H1 (cell line): ENCODE measurements at regions of chr1 and their contacts with region 1.

Region 1: GRCh38 chr1:39258146-39258924 is 53.8 kb downstream of the MACF1 start:
- DNase-seq: peak; percentile 47 to 89
- H3K4me3 ChIP-seq: no peak overlapping the region
- H3K27ac ChIP-seq: no peak overlapping the region
- H3K4me1 ChIP-seq: peaks cover 0 to 2% (median 0%) of the 10 kb centered on the region in 4 experiments; a peak in 1 of 7 replicates
- H3K27me3 ChIP-seq: no peaks in the 10 kb centered on the region
- CTCF ChIP-seq: peak; percentile 65 to 95 (median 89)
- EP300 ChIP-seq: no peak
- POLR2A ChIP-seq: no peak
- RAD21 ChIP-seq: peak; percentile 98 to 99

Region 2: DNA sequence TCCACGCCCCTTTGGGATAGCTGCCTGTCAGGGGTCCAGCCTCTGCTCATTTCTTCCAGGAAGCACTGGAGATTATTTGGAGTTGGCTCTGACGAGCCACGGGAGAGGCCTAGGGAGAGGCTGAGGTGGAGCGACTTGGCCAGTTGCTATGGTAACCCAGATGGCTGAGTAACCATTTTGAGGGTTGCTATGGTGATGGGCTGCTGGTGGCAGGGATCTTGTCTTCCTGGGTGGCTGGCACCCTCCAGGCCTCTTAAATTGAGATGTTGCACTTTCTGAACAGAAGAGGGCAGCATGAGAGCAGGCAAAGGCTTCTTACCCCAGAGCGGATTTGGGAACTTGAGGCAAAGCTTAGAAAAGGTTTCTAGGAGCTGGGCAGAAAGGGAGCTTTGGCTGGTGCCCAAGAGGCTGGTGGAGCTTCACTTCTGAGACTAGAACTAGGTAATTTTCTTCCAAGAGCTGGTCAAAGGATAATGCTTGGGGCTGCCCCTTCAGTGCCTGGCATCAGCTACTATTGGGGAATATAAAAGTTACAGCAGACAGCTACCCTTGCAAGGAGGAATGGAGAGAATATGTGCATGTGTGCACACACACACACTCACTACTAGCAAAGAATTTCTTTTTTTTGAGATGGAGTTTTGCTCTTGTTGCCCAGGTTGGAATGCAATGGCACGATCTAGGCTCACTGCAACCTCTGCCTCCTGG is 159.6 kb before region 1 on chr1:
- CTCF ChIA-PET with region 1: interaction called, 139 read pairs
- POLR2A ChIA-PET with region 1: interaction called, 5 read pairs
- DNase-seq: peak; percentile 75 to 89
- H3K4me3 ChIP-seq: no peak overlapping the region
- H3K27ac ChIP-seq: peak overlapping the region; percentile 21; the same call in 1 of the 2 replicates
- H3K4me1 ChIP-seq: peaks cover 7 to 13% (median 12%) of the 10 kb centered on the region in 4 experiments
- H3K27me3 ChIP-seq: no peaks in the 10 kb centered on the region
- CTCF ChIP-seq: peak; percentile 40 to 88 (median 88)
- EP300 ChIP-seq: peak in 1 of 2 experiments; percentile 39; a peak in 1 of 3 replicates
- POLR2A ChIP-seq: no peak
- RAD21 ChIP-seq: peak; percentile 98 to 99

Region 3: DNA sequence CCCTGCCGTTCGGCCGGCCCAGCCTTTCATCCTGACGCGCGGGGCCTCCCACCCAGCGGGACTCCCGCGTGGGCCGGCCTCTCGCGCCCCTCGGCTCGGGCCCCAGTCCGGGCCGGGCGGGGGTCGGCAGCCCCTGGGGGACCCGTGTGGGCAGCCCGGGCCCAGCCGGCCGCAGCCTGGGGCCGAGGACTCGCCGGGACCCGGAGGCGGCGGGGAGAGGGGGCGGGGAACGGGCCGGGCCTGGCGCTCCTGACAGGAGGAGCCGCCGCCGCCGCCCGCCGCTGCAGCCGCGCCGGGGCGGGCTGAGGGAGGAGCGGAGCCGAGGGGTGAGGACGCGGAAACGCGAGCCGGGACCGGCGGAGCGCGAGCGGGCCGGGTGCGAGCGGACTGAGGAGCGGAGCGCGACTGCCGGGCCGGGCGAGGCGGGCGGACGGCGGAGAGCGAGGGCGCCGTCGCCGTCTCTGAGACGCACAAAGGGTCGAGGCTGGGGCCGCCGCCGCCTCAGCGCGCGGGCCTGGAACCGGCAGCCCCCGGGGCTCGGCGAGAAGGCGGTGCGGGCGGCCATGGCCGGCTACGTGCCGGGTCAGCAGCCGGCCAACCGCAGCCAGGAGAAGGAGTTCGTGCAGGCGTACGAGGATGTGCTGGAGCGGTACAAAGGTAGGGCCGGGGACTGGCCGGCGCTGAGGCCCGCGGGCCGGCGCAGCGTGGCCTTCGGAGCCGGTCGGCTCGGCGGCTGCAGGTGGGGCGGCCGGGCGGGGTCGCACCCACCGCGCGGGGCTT is 153.1 kb before region 1 on chr1:
- CTCF ChIA-PET with region 1: interaction called, 139 read pairs
- POLR2A ChIA-PET with region 1: interaction called, 9 read pairs
- DNase-seq: peak in 1 of 2 experiments; percentile 67
- H3K4me3 ChIP-seq: peak overlapping the region; percentile 84 to 94 (median 92)
- H3K27ac ChIP-seq: peak overlapping the region; percentile 86
- H3K4me1 ChIP-seq: peaks cover 23 to 37% (median 25%) of the 10 kb centered on the region in 4 experiments
- H3K27me3 ChIP-seq: no peaks in the 10 kb centered on the region
- CTCF ChIP-seq: no peak
- EP300 ChIP-seq: no peak
- POLR2A ChIP-seq: no peak
- RAD21 ChIP-seq: no peak

Region 4: DNA sequence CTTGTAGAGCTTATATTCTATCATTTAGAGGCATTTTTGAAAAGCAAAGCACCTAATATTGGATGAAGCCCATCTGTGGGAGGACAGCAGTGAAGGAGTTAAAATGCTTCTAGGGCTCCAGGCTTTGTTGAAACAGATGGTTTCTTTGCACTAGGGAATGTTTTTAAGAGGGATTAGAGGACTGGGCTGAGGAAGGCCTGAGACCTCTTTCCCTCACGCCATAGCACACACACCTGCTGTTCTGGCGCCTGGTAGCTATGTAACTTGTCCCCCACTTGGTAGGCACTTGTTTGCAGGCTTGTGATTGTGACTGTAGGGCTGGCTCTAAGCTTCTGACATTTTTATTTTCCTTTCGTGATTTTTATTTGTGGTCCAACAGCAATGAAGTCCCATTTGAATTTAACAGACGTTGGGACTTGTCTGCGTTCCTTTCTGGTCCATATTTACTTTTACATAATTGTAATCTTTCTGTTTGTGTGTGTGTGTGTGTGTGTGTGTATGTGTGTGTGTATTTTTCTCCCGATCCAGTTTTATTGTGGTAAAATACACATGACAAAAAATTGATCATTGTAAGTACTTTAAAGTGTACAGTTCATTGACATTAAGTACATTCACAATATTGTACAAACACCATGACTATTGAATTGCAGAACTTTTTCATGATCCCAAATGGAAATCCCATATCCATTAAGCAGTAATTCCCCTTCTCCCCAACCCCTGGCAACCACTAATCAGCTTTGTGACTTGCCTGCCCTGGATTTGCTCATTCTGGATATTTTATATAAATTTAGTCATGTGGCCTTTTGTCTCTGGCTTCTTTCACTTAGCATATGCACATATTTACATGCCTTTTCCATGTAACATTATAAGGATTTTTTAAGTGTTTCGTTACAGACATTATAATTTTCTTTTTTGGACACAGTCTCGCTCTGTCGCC is 87.3 kb before region 1 on chr1:
- CTCF ChIA-PET with region 1: interaction called, 13 read pairs
- POLR2A ChIA-PET with region 1: no interaction called
- DNase-seq: no peak
- H3K4me3 ChIP-seq: no peak overlapping the region
- H3K27ac ChIP-seq: peak overlapping the region; percentile 8; the same call in 1 of the 2 replicates
- H3K4me1 ChIP-seq: peaks cover 3 to 21% (median 16%) of the 10 kb centered on the region in 4 experiments; a peak in 6 of 7 replicates
- H3K27me3 ChIP-seq: no peaks in the 10 kb centered on the region
- CTCF ChIP-seq: no peak
- EP300 ChIP-seq: peak in 1 of 2 experiments; percentile 64; a peak in 1 of 3 replicates
- POLR2A ChIP-seq: peak in 1 of 2 experiments; percentile 34; a peak in 1 of 3 replicates
- RAD21 ChIP-seq: peak in 1 of 2 experiments; percentile 18; a peak in 1 of 4 replicates

Region 5: GRCh38 chr1:39183503-39184353 is 74.6 kb before region 1 on chr1:
- CTCF ChIA-PET with region 1: interaction called, 157 read pairs
- POLR2A ChIA-PET with region 1: no interaction called
- DNase-seq: peak in 1 of 2 experiments; percentile 59
- H3K4me3 ChIP-seq: no peak overlapping the region
- H3K27ac ChIP-seq: no peak overlapping the region
- H3K4me1 ChIP-seq: peaks cover 2 to 9% (median 3%) of the 10 kb centered on the region in 4 experiments; a peak in 4 of 7 replicates
- H3K27me3 ChIP-seq: no peaks in the 10 kb centered on the region
- CTCF ChIP-seq: peak; percentile 38 to 66 (median 58)
- EP300 ChIP-seq: no peak
- POLR2A ChIP-seq: no peak
- RAD21 ChIP-seq: peak; percentile 55 to 61

Region 6: GRCh38 chr1:39214998-39215873 is 43.1 kb before region 1 on chr1:
- CTCF ChIA-PET with region 1: interaction called, 18 read pairs
- POLR2A ChIA-PET with region 1: no interaction called
- DNase-seq: peak in 1 of 2 experiments; percentile 47
- H3K4me3 ChIP-seq: no peak overlapping the region
- H3K27ac ChIP-seq: no peak overlapping the region
- H3K4me1 ChIP-seq: peaks cover 10 to 23% (median 13%) of the 10 kb centered on the region in 4 experiments
- H3K27me3 ChIP-seq: no peaks in the 10 kb centered on the region
- CTCF ChIP-seq: no peak
- EP300 ChIP-seq: no peak
- POLR2A ChIP-seq: no peak
- RAD21 ChIP-seq: no peak

Region 7: GRCh38 chr1:39238476-39238875 is 19.9 kb before region 1 on chr1:
- CTCF ChIA-PET with region 1: interaction called, 26 read pairs
- POLR2A ChIA-PET with region 1: no interaction called
- DNase-seq: no peak
- H3K4me3 ChIP-seq: no peak overlapping the region
- H3K27ac ChIP-seq: no peak overlapping the region
- H3K4me1 ChIP-seq: no peaks in the 10 kb centered on the region
- H3K27me3 ChIP-seq: no peaks in the 10 kb centered on the region
- CTCF ChIP-seq: no peak
- EP300 ChIP-seq: no peak
- POLR2A ChIP-seq: no peak
- RAD21 ChIP-seq: no peak